CD8-positive, alpha-beta memory T cell (primary cell): ENCODE measurements at regions of chr5 and their contacts with region 1.

Region 1: DNA sequence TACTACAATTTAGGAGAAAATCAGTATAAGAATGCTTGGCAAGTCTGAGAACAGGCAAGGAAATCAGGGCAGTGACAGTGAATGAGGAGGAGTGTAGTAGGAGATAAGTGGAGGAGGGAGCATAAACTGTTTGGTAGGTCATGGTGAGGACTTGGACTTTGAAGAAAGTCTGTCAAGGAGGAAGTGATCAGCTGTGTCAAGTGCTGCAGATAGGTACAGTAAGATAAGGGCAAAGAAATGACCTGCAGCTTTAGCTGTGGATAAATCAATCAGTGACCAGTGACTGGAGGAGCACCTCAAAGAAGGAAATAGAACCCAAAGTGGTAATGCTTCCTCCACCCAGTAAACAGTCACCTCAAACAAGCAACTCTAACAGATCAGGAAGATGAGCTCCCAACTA is 106.3 kb downstream of the RAPGEF6 start:
- DNase-seq: no peak
- H3K4me3 ChIP-seq: no peak overlapping the region
- H3K4me3 Mint-ChIP-seq: peak overlapping the region in 6 of 7 donors; percentile 15 to 61 (median 28)
- H3K27ac ChIP-seq: no peak overlapping the region
- H3K27ac Mint-ChIP-seq: peak overlapping the region in 6 of 8 donors; percentile 3 to 83 (median 34)
- H3K4me1 ChIP-seq: peaks cover 86% of the 10 kb centered on the region
- H3K4me1 Mint-ChIP-seq: peaks cover 73 to 80% (median 75%) of the 10 kb centered on the region in 3 donors
- H3K27me3 ChIP-seq: no peaks in the 10 kb centered on the region
- H3K27me3 Mint-ChIP-seq: no peaks in the 10 kb centered on the region

Region 2: GRCh38 chr5:131139321-131139720 is 389.4 kb before region 1 on chr5:
- CTCF ChIA-PET with region 1: no interaction called
- POLR2A ChIA-PET with region 1: no interaction called
- DNase-seq: no peak
- H3K4me3 ChIP-seq: no peak overlapping the region
- H3K4me3 Mint-ChIP-seq: no peak overlapping the region
- H3K27ac ChIP-seq: no peak overlapping the region
- H3K27ac Mint-ChIP-seq: no peak overlapping the region
- H3K4me1 ChIP-seq: no peaks in the 10 kb centered on the region
- H3K4me1 Mint-ChIP-seq: peaks cover 0 to 7% (median 0%) of the 10 kb centered on the region in 3 donors
- H3K27me3 ChIP-seq: no peaks in the 10 kb centered on the region
- H3K27me3 Mint-ChIP-seq: peaks cover 4 to 7% of the 10 kb centered on the region in 2 donors

Region 3: DNA sequence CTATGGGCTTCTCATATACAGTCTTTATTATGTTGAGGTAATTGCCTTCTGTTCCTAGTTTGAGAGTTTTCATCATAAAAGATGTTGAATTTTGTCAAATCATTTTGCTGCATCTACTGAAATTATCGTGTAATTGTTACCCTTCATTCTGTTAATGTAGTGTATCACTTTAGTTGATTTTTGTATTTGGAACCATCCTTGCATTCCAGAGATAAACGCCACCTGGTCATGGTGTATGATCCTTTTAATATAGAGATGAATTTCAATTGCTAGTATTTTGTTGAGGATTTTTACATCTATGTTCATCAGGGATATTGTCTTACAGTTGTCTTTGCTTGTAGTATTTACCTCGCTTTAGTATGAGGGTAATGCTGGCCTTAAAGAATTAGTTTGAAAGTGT is 397.5 kb after region 1 on chr5:
- CTCF ChIA-PET with region 1: no interaction called
- POLR2A ChIA-PET with region 1: no interaction called
- DNase-seq: no peak
- H3K4me3 ChIP-seq: no peak overlapping the region
- H3K4me3 Mint-ChIP-seq: no peak overlapping the region
- H3K27ac ChIP-seq: no peak overlapping the region
- H3K27ac Mint-ChIP-seq: no peak overlapping the region
- H3K4me1 ChIP-seq: no peaks in the 10 kb centered on the region
- H3K4me1 Mint-ChIP-seq: no peaks in the 10 kb centered on the region
- H3K27me3 ChIP-seq: no peaks in the 10 kb centered on the region
- H3K27me3 Mint-ChIP-seq: peaks cover 0 to 1% of the 10 kb centered on the region in 2 donors

Region 4: DNA sequence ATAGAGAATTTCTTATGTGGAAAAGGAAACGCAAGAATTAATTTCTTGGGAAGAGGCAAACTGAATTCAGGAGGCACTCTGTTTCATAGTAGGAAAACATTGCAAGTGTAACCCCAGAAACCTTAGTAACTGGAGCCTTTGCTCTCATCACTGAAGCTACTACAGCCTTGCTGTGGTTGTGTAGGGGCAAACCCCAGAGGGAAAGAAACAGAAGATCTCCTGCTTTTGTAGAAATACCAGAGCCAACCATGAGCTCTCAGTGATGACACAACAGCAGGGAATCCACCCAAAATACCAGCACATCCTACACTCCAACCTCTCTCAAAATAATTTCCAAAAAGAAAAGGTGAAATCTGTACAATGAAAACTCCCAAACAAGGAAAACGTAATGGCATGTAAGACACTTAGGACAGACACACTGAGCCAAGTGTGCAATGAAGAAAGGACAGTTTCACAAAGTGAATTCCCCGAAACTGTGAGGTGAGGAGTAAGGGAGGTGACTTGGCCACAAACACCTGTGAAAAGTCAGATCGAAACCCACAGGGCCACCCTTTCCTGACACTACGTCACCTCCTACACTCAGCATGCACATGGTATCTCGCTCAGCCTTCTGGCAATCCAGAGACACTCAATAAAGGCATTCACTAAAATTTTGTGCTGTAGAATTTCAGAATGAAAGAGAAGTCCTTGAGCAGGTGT is 491.3 kb after region 1 on chr5:
- CTCF ChIA-PET with region 1: no interaction called
- POLR2A ChIA-PET with region 1: interaction called, 10 read pairs
- DNase-seq: peak; percentile 47 to 83 (median 65)
- H3K4me3 ChIP-seq: no peak overlapping the region
- H3K4me3 Mint-ChIP-seq: peak overlapping the region; percentile 9 to 68 (median 60)
- H3K27ac ChIP-seq: peak overlapping the region; percentile 34
- H3K27ac Mint-ChIP-seq: peak overlapping the region; percentile 79 to 98 (median 96)
- H3K4me1 ChIP-seq: peaks cover 37% of the 10 kb centered on the region
- H3K4me1 Mint-ChIP-seq: peaks cover 48 to 70% (median 62%) of the 10 kb centered on the region in 3 donors
- H3K27me3 ChIP-seq: no peaks in the 10 kb centered on the region
- H3K27me3 Mint-ChIP-seq: no peaks in the 10 kb centered on the region

Region 5: DNA sequence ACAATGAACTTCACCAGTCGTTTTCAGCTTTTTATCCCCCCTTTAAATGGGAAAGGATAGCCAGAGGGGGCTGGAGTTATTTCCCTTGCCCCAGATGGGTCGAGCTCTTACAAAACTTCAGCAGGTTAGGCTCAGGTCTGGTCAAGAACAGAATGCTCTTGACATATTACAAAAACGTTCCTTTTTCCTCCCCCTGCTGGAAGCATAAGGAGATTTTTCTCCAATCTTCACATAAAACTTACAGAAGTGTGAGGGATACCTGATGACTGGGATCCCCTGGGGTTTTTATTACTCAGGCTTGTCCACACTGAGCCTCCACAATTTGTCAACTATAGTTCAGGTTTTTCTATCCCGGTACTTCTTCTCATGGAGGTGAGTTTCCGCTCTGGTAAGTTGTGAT is 605.7 kb after region 1 on chr5:
- CTCF ChIA-PET with region 1: no interaction called
- POLR2A ChIA-PET with region 1: no interaction called
- DNase-seq: peak in 1 of 5 donors; percentile 6
- H3K4me3 ChIP-seq: no peak overlapping the region
- H3K4me3 Mint-ChIP-seq: no peak overlapping the region
- H3K27ac ChIP-seq: no peak overlapping the region
- H3K27ac Mint-ChIP-seq: no peak overlapping the region
- H3K4me1 ChIP-seq: no peaks in the 10 kb centered on the region
- H3K4me1 Mint-ChIP-seq: peaks cover 1 to 8% (median 4%) of the 10 kb centered on the region in 3 donors
- H3K27me3 ChIP-seq: no peaks in the 10 kb centered on the region
- H3K27me3 Mint-ChIP-seq: peaks cover 3 to 12% of the 10 kb centered on the region in 2 donors